Naive thymus-derived CD4-positive, alpha-beta T cell (primary cell): ENCODE measurements at regions of chrX and their contacts with region 1.

Region 1: DNA sequence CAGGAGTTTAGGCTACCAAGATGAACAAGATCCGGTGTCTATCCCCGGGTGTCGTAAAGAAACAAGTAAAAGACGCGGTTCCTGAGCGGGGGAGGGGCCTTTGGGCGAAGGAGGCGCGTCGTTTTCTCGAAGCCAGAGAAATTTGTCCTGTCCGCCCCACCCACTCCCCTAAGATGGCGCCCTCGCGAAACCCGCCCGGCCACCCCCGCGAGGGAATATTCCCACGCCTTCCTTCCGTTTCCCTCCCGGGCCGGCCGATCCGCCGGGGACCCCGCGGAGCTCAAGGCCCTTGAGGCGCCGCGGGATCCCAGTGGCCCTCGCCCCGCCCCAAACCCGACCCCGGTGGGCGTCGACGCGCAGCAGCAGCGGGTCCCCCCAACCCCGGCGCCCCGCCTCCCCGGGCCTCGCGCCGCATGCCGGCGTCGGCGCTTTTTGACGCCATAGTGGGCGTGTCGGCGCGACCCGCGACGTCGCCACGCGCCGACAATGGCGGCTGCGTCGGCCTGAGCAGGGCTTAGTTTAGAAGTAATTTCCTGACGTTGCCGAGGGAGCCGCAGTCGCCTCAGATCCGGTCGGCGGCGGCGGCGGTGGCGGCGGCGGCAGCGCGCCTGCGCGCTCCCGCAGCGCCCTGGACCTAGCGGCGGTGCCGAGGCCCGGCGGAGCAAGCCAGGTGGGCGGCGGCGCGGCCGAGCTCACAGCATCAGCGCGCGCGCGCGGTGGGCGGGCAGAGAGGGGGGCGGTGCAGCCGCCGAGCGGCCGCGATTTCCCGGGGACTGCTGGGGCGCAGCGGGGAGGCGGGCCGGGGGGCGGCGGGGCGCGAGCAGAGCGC is at the start of gene HTATSF1:
- DNase-seq: peak; percentile 72 to 92 (median 88)
- ATAC-seq: peak; percentile 89
- H3K4me3 ChIP-seq: peak within 1 kb of the TSS; percentile 69
- H3K4me3 Mint-ChIP-seq: peak within 1 kb of the TSS; percentile 84 to 97 (median 94)
- H3K27ac ChIP-seq: peak within 1 kb of the TSS; percentile 86
- H3K27ac Mint-ChIP-seq: peak within 1 kb of the TSS; percentile 93 to 99 (median 97)
- H3K4me1 ChIP-seq: peaks cover 7 to 10% of the 10 kb centered on the region in 2 donors
- H3K4me1 Mint-ChIP-seq: peaks cover 6 to 24% (median 17%) of the 10 kb centered on the region in 7 donors
- H3K27me3 ChIP-seq: no peaks in the 10 kb centered on the region
- H3K27me3 Mint-ChIP-seq: peaks cover 0 to 5% (median 0%) of the 10 kb centered on the region in 5 donors
- total RNA-seq, gene HTATSF1: 25.9 to 67.2 (median 29.0) TPM

Region 2: GRCh38 chrX:135973548-135974278 is 523.3 kb before region 1 on chrX and contains the start of gene MMGT1:
- CTCF ChIA-PET with region 1: no interaction called
- POLR2A ChIA-PET with region 1: no interaction called
- intact Hi-C with region 1: loop called in 1 of 2 experiments (anchors 2 kb)
- DNase-seq: peak; percentile 51 to 82 (median 77)
- ATAC-seq: peak; percentile 91
- H3K4me3 ChIP-seq: peak within 1 kb of the TSS; percentile 91
- H3K4me3 Mint-ChIP-seq: peak within 1 kb of the TSS; percentile 90 to 99 (median 98)
- H3K27ac ChIP-seq: peak within 1 kb of the TSS; percentile 83
- H3K27ac Mint-ChIP-seq: peak within 1 kb of the TSS; percentile 92 to 99 (median 97)
- H3K4me1 ChIP-seq: peaks cover 13 to 17% of the 10 kb centered on the region in 2 donors
- H3K4me1 Mint-ChIP-seq: peaks cover 10 to 37% (median 28%) of the 10 kb centered on the region in 7 donors
- H3K27me3 ChIP-seq: no peaks in the 10 kb centered on the region
- H3K27me3 Mint-ChIP-seq: no peaks in the 10 kb centered on the region
- total RNA-seq, gene MMGT1: 22.0 to 28.4 (median 24.0) TPM

Region 3: DNA sequence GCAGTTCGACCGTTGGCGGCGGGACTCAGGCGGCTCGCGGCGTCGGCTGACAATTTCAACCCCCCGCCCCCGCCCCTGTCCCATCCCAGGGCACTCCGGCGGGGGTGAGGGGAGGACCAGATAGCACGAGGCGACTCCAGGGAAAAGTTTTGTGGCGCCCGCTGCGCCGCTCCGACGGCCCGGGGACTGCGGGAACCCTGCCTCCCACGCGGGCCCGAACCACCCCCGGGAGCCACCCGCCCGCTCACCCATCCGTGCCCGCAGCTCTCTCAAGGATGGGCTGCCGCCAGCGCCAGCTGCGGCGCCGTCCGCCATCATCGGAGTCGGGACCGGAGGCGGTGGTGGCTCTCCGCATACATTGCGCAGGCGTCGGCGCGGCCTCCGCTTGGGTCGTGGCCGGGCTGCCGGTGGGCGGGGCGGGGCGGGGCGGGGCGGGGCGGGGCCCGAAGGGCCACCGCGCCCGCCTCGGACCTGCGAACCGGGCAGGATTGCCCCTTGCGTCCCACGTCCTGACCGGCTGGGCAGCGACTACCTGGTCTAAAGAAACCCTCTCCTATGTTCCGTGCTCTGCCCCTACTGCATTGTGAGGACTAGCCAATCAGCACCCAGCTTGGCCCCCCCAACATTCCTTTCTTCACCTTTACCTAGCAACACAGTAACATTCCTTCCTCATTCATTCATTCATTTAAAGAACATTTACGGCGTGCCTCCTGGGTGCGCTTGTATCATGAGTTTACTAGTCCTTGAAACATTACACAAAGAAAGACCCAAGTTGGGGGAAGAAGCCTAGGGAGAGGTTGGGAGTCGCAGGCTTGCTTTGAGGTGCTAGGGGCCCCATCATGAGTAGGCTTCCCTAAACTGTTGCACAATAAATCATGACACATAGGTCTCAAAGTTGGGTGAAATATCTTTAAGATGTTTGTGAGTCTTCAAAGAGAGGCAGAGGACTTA is 245.7 kb before region 1 on chrX and contains the start of gene MAP7D3:
- CTCF ChIA-PET with region 1: no interaction called
- POLR2A ChIA-PET with region 1: no interaction called
- intact Hi-C with region 1: loop called (anchors 1 to 2 kb)
- DNase-seq: peak; percentile 54 to 74 (median 66)
- ATAC-seq: peak; percentile 96
- H3K4me3 ChIP-seq: peak within 1 kb of the TSS; percentile 58
- H3K4me3 Mint-ChIP-seq: peak within 1 kb of the TSS; percentile 84 to 98 (median 91)
- H3K27ac ChIP-seq: peak within 1 kb of the TSS; percentile 67
- H3K27ac Mint-ChIP-seq: peak within 1 kb of the TSS; percentile 82 to 97 (median 89)
- H3K4me1 ChIP-seq: no peaks in the 10 kb centered on the region
- H3K4me1 Mint-ChIP-seq: peaks cover 0 to 15% (median 8%) of the 10 kb centered on the region in 7 donors
- H3K27me3 ChIP-seq: no peaks in the 10 kb centered on the region
- H3K27me3 Mint-ChIP-seq: no peaks in the 10 kb centered on the region
- total RNA-seq, gene MAP7D3: 5.9 to 15.8 (median 7.7) TPM

Region 4: GRCh38 chrX:136450050-136450830 is 46.7 kb before region 1 on chrX:
- CTCF ChIA-PET with region 1: no interaction called
- POLR2A ChIA-PET with region 1: no interaction called
- intact Hi-C with region 1: no loop called
- DNase-seq: no peak
- ATAC-seq: no peak
- H3K4me3 ChIP-seq: no peak overlapping the region
- H3K4me3 Mint-ChIP-seq: no peak overlapping the region
- H3K27ac ChIP-seq: no peak overlapping the region
- H3K27ac Mint-ChIP-seq: no peak overlapping the region
- H3K4me1 ChIP-seq: no peaks in the 10 kb centered on the region
- H3K4me1 Mint-ChIP-seq: no peaks in the 10 kb centered on the region
- H3K27me3 ChIP-seq: no peaks in the 10 kb centered on the region
- H3K27me3 Mint-ChIP-seq: no peaks in the 10 kb centered on the region

Region 5: GRCh38 chrX:136564698-136565097 is 67.7 kb after region 1 on chrX:
- CTCF ChIA-PET with region 1: no interaction called
- POLR2A ChIA-PET with region 1: no interaction called
- intact Hi-C with region 1: no loop called
- DNase-seq: no peak
- ATAC-seq: no peak
- H3K4me3 ChIP-seq: no peak overlapping the region
- H3K4me3 Mint-ChIP-seq: no peak overlapping the region
- H3K27ac ChIP-seq: no peak overlapping the region
- H3K27ac Mint-ChIP-seq: no peak overlapping the region
- H3K4me1 ChIP-seq: no peaks in the 10 kb centered on the region
- H3K4me1 Mint-ChIP-seq: peaks cover 0 to 4% (median 0%) of the 10 kb centered on the region in 7 donors
- H3K27me3 ChIP-seq: no peaks in the 10 kb centered on the region
- H3K27me3 Mint-ChIP-seq: peaks cover 0 to 29% (median 0%) of the 10 kb centered on the region in 5 donors

Region 6: GRCh38 chrX:136577552-136577951 is 80.6 kb after region 1 on chrX:
- CTCF ChIA-PET with region 1: no interaction called
- POLR2A ChIA-PET with region 1: no interaction called
- intact Hi-C with region 1: loop called (anchors 1 kb)
- DNase-seq: peak; percentile 30 to 74 (median 62)
- ATAC-seq: peak; percentile 99
- H3K4me3 ChIP-seq: no peak overlapping the region
- H3K4me3 Mint-ChIP-seq: peak overlapping the region in 2 of 10 donors; percentile 20 to 63
- H3K27ac ChIP-seq: no peak overlapping the region
- H3K27ac Mint-ChIP-seq: peak overlapping the region in 8 of 9 donors; percentile 10 to 83 (median 67)
- H3K4me1 ChIP-seq: peaks cover 3 to 4% of the 10 kb centered on the region in 2 donors
- H3K4me1 Mint-ChIP-seq: peaks cover 0 to 22% (median 11%) of the 10 kb centered on the region in 7 donors
- H3K27me3 ChIP-seq: no peaks in the 10 kb centered on the region
- H3K27me3 Mint-ChIP-seq: no peaks in the 10 kb centered on the region

Region 7: GRCh38 chrX:136880452-136881013 is 383.5 kb after region 1 on chrX and contains the start of gene RBMX:
- CTCF ChIA-PET with region 1: no interaction called
- POLR2A ChIA-PET with region 1: interaction called, 4 read pairs
- intact Hi-C with region 1: loop called (anchors 1 kb)
- DNase-seq: peak; percentile 75 to 92 (median 89)
- ATAC-seq: peak; percentile 94
- H3K4me3 ChIP-seq: peak within 1 kb of the TSS; percentile 87
- H3K4me3 Mint-ChIP-seq: peak within 1 kb of the TSS; percentile 91 to 99 (median 97)
- H3K27ac ChIP-seq: peak within 1 kb of the TSS; percentile 95
- H3K27ac Mint-ChIP-seq: peak within 1 kb of the TSS; percentile 96 to 100 (median 99)
- H3K4me1 ChIP-seq: peaks cover 4 to 9% of the 10 kb centered on the region in 2 donors
- H3K4me1 Mint-ChIP-seq: peaks cover 0 to 33% (median 25%) of the 10 kb centered on the region in 7 donors
- H3K27me3 ChIP-seq: no peaks in the 10 kb centered on the region
- H3K27me3 Mint-ChIP-seq: no peaks in the 10 kb centered on the region
- total RNA-seq, gene RBMX: 204 to 263 (median 259) TPM

Region 8: DNA sequence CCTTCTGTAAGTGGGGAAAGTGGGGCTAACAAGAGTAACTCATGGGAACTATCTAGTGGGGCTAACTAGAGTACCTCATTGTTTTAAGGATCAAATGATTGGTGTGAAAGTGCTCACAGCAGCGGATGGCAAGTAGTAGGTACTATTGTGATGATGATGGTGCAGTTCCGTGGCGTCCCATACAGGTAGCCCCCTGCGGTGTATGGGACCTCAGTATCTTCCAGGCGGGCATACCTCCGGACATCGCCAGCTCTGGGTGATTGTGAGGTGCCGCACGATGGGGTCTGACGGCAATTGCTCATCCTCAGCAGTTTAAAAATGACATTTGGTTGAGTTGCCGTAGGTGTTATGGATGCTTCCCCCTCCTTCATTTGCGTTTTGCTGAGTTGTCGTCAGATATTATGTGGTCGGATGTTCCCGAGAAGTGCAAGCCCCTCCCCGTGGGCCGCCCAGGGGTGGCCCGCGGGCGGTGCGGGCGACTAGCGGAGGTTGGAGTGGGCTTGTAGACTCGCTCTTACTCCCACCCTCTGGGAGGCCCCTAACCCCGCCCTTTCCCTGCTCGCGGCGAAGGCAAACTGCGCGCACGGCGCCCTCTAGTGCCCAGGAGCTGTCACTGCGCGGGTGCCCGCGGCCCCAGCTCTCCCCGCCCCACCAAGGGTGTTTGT is 555.1 kb after region 1 on chrX:
- CTCF ChIA-PET with region 1: no interaction called
- POLR2A ChIA-PET with region 1: no interaction called
- intact Hi-C with region 1: loop called (anchors 2 to 5 kb)
- DNase-seq: peak; percentile 65 to 81 (median 77)
- ATAC-seq: peak; percentile 99
- H3K4me3 ChIP-seq: peak overlapping the region; percentile 68
- H3K4me3 Mint-ChIP-seq: peak overlapping the region; percentile 85 to 93 (median 91)
- H3K27ac ChIP-seq: no peak overlapping the region
- H3K27ac Mint-ChIP-seq: peak overlapping the region in 5 of 9 donors; percentile 21 to 63 (median 45)
- H3K4me1 ChIP-seq: no peaks in the 10 kb centered on the region
- H3K4me1 Mint-ChIP-seq: peaks cover 0 to 15% (median 4%) of the 10 kb centered on the region in 7 donors
- H3K27me3 ChIP-seq: no peaks in the 10 kb centered on the region
- H3K27me3 Mint-ChIP-seq: peaks cover 10 to 50% (median 13%) of the 10 kb centered on the region in 5 donors